ENCODE measurements at regions of chr9 and their contacts with region 1.

Region 1: DNA sequence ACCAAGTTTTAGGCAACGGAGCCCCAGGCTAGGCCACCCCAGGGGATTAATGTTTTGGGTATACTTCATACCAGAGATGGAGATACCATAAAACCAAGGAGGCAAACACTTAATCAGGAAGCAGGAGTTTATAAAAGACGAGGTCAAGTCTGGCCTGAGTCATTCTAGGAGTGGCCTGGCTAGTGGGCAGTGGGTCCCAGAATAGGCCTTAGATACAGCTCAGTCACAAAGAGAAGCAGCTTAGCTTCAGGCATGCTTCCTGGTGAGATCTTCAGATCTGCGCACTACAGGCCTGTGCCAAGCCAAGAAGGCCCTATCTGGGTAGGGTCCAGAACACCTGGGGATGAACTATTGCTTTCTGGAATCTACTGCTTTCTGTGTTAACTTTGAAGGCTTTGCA is 20.6 kb upstream of the NR5A1 start:
- DNase-seq: no peak

Region 2: GRCh38 chr9:122642226-122642625 is 1885.6 kb before region 1 on chr9:
- intact Hi-C with region 1: no loop called
- DNase-seq: no peak

Region 3: GRCh38 chr9:124202447-124202971 is 325.3 kb before region 1 on chr9:
- intact Hi-C with region 1: no loop called
- DNase-seq: peak; percentile 82

Region 4: DNA sequence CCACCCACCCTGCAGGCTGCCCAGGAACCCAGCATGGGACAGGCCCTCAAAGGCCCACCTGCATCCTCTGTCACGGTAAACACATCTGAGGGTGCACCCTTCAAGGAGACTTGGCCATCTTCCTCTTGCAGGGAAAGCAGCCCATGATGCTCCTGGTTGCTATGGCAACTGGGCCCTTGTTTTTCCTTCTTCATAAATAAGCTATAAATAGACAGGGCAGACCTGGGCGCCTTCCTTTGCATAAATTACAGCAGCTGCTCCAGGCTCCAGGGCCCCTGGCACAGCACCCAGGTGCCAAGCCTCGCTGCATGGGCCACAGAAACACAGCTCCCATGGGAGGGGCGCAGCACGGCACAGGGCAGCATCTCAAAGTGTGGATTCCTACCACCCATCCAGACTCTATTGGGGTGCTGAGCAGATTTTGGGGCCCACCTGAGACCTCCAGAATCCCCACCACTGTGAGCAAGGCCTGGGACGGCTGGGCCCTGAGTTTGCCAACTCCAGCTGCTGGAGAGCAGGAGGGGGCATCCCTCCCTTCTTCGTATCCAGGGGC is 106.7 kb before region 1 on chr9:
- intact Hi-C with region 1: loop called in 1 of 2 experiments (anchors 5 kb)
- DNase-seq: no peak

Region 5: GRCh38 chr9:124725068-124725452 is 197.3 kb after region 1 on chr9:
- intact Hi-C with region 1: loop called in 1 of 2 experiments (anchors 5 kb)
- DNase-seq: no peak

Region 6: GRCh38 chr9:126203126-126203712 is 1675.4 kb after region 1 on chr9:
- intact Hi-C with region 1: no loop called
- DNase-seq: no peak

Measured in posterior vena cava (tissue), 2 donors.